Activated T-helper 2 cell treated with anti-CD3 and anti-CD28 coated beads, Interferon-gamma antibody, Interleukin-2, Interleukin-4, amounts not matched to agents 10 μg/mL and 5 μg/mL and 100 μg/mL, durations not matched to agents 14 hours and 24 hours and 36 hours (primary cell): ENCODE measurements at regions of chr2 and their contacts with region 1.

Region 1: GRCh38 chr2:84925724-84926376 is 20.4 kb downstream of the TMSB10 start:
- DNase-seq: peak; percentile 97
- H3K4me3 Mint-ChIP-seq: peak overlapping the region; percentile 91
- H3K27ac Mint-ChIP-seq: peak overlapping the region; percentile 92
- H3K4me1 Mint-ChIP-seq: peaks cover 49% of the 10 kb centered on the region
- H3K27me3 Mint-ChIP-seq: no peaks in the 10 kb centered on the region

Region 2: DNA sequence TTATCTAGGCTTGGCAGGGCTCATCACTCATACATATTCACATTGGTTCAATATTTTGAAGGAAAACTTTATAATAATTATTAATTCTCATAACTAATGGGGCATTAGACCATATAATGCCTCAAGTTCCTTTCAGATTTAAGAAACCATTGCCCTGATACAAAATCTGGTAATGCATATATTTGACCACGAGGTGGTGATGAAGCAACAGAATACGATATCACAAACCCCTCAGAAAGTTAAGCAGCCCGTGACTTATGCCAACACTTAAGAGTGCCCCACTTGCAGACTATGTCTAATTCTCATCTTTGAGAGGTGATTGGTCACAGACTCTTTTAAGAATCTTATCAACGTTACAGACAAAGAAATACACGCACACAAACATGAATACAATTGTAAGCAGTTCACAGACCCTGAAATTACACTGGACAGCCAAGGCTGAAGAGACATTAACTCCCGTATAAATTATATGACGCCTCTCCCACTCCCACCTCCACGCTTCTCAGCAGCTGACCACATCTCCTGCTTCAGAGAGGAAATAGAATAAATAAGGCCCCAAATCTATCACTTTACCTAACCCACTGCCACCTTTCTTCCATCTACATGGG is 430.2 kb before region 1 on chr2:
- intact Hi-C with region 1: loop called (anchors 1 kb)
- DNase-seq: no peak
- H3K4me3 Mint-ChIP-seq: no peak overlapping the region
- H3K27ac Mint-ChIP-seq: no peak overlapping the region
- H3K4me1 Mint-ChIP-seq: peaks cover 6% of the 10 kb centered on the region
- H3K27me3 Mint-ChIP-seq: peaks cover 5% of the 10 kb centered on the region

Region 3: GRCh38 chr2:84881581-84882414 is 44.1 kb before region 1 on chr2:
- intact Hi-C with region 1: loop called (anchors 1 kb)
- DNase-seq: peak; percentile 82
- H3K4me3 Mint-ChIP-seq: peak overlapping the region; percentile 91
- H3K27ac Mint-ChIP-seq: peak overlapping the region; percentile 95
- H3K4me1 Mint-ChIP-seq: peaks cover 48% of the 10 kb centered on the region
- H3K27me3 Mint-ChIP-seq: no peaks in the 10 kb centered on the region

Region 4: GRCh38 chr2:84939426-84940087 is 13.7 kb after region 1 on chr2:
- intact Hi-C with region 1: loop called (anchors 1 kb)
- DNase-seq: peak; percentile 85
- H3K4me3 Mint-ChIP-seq: peak overlapping the region; percentile 72
- H3K27ac Mint-ChIP-seq: peak overlapping the region; percentile 98
- H3K4me1 Mint-ChIP-seq: peaks cover 50% of the 10 kb centered on the region
- H3K27me3 Mint-ChIP-seq: no peaks in the 10 kb centered on the region

Region 5: DNA sequence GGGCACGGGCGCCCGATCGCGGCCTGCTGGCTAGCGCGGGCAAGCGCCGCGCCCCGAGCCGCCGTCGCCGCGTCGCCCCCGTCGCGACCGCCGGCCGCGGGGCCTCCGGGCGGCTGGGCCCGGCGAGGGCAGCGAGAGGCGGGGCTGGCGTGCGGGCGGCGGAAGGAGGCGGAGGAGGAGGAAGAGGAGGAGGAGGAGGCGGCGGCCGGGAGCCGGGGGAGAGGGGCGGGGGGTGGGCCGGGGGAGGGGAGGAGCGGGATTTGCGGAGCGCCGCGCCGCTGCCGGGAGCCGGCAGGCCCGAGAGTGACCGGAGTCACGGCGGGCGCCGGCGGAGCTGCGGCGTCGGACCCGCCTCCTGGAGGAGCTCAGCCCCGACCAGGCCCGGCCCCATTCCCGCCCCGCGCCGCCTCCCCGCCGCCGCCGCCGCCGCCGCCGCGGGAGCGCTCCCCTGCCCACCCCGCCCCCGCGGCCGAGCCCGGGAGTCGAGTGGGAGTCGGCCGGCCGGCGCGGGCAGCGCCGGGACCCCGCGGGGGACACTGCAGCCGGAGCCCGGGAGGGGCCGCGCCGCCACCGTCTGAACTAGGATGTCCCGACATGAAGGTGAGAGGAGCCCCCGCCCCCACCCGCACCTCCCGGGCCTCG is 45.1 kb after region 1 on chr2 and contains the start of gene KCMF1:
- intact Hi-C with region 1: loop called (anchors 2 kb)
- DNase-seq: peak; percentile 70
- H3K4me3 Mint-ChIP-seq: peak within 1 kb of the TSS; percentile 100
- H3K27ac Mint-ChIP-seq: peak within 1 kb of the TSS; percentile 100
- H3K4me1 Mint-ChIP-seq: peaks cover 39% of the 10 kb centered on the region
- H3K27me3 Mint-ChIP-seq: no peaks in the 10 kb centered on the region
- total RNA-seq, gene KCMF1: 82.6 and 86.3 TPM in 2 replicates

Region 6: DNA sequence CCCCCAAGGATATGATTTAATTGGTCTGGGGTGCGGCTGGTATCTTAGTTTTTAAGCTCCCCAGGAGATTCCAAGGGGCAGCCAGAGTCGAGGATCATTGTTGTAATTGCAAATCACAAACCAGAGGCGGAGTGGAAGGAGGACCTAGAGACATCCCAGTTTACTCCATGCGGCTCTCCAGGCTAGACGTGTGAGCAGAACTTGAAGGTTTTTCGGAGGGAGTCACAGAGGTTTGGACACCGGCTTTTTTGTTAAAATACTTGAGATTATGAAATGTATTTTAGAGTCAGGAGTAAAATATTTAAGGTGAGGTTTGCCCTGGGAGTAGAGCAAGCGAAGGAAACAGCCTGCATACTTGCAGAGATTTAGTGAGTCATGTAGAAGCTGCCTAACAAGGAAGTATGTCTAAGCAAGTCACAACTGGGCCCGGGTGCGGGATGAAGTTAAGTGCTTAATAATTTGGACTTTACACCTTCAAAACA is 362.4 kb after region 1 on chr2:
- intact Hi-C with region 1: loop called (anchors 2 kb)
- DNase-seq: no peak
- H3K4me3 Mint-ChIP-seq: no peak overlapping the region
- H3K27ac Mint-ChIP-seq: no peak overlapping the region
- H3K4me1 Mint-ChIP-seq: peaks cover 22% of the 10 kb centered on the region
- H3K27me3 Mint-ChIP-seq: no peaks in the 10 kb centered on the region

Region 7: GRCh38 chr2:85389116-85389515 is 463.3 kb after region 1 on chr2:
- intact Hi-C with region 1: no loop called
- DNase-seq: no peak
- H3K4me3 Mint-ChIP-seq: no peak overlapping the region
- H3K27ac Mint-ChIP-seq: no peak overlapping the region
- H3K4me1 Mint-ChIP-seq: peaks cover 4% of the 10 kb centered on the region
- H3K27me3 Mint-ChIP-seq: no peaks in the 10 kb centered on the region